ENCODE measurements at regions of chr3 and their contacts with region 1.

Region 1: GRCh38 chr3:129745253-129745652 is 138.8 kb upstream of the PLXND1 start:
- DNase-seq: no peak
- H3K4me3 ChIP-seq: no peak overlapping the region
- H3K27ac ChIP-seq: no peak overlapping the region
- H3K4me1 ChIP-seq: peaks cover 15% of the 10 kb centered on the region
- H3K27me3 ChIP-seq: no peaks in the 10 kb centered on the region
- CTCF ChIP-seq: no peak

Region 2: DNA sequence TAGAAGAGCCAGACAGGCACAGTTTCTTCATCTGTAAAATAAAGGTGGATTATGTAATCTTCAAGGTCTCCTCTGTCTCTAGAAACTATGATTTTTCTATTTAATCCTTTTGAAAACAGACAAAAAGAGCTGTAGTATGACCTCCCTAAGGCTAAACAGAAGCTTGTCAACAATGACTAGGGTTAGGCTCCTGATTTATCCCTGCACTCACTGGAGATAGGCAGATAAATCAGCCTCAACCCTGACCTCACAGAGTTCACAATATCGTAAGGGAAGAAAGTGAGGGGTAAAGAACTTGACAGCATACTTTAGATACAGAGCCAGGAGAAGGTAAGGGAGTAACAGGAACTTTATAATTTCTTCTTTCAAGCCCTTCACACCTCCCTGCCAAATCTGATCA is 23.5 kb after region 1 on chr3:
- CTCF ChIA-PET with region 1: interaction called, 10 read pairs
- POLR2A ChIA-PET with region 1: interaction called, 21 read pairs
- intact Hi-C with region 1: no loop called
- DNase-seq: no peak
- H3K4me3 ChIP-seq: no peak overlapping the region
- H3K27ac ChIP-seq: 0 out of 2 replicates have a peak overlapping the region, but pooled peaks have one; percentile 8
- H3K4me1 ChIP-seq: no peaks in the 10 kb centered on the region
- H3K27me3 ChIP-seq: no peaks in the 10 kb centered on the region
- CTCF ChIP-seq: no peak

Region 3: GRCh38 chr3:129984125-129984524 is 238.9 kb after region 1 on chr3:
- CTCF ChIA-PET with region 1: no interaction called
- POLR2A ChIA-PET with region 1: no interaction called
- intact Hi-C with region 1: no loop called
- DNase-seq: peak in 1 of 2 experiments; percentile 9
- H3K4me3 ChIP-seq: no peak overlapping the region
- H3K27ac ChIP-seq: no peak overlapping the region
- H3K4me1 ChIP-seq: no peaks in the 10 kb centered on the region
- H3K27me3 ChIP-seq: no peaks in the 10 kb centered on the region
- CTCF ChIP-seq: no peak

Measured in PC-9 (cell line).